HEK293 (cell line): ENCODE measurements at regions of chr12 and their contacts with region 1.

Region 1: DNA sequence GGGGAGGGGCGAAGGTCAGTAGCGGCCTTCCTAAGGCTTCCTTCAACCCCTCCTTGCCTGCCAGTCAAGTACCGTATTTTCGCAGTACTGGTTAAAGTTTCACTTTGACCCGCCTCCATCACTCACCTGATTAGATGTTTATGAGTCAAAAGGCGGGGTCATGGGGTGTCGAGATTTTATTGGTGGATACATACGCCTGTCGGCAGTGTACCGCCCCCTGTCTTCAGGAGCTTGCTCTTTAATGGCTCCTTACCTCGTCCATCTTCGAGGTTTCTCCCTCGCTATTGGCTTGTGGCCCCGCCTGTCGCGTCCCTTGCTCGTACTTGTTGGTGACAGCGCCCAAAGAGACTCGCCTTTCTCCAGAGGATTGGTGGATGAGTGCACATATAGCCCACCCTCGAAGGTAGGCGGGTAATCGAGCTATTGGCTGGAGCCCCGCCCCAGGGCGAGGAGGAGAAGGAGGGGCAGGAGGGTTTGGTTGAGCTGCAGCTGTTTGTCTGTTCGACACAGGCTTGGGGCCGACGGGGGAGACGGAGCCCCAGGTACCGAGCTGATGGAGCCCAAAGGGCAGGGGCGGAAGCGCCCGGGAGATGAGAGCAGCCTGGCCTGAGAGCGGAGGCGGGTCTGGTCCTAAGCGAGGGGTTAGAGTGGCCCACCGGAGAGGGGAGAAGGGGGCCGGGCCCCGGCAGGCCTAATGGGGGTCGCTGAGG is at the start of gene RAB5B:
- H3K4me3 ChIP-seq: peak within 1 kb of the TSS; percentile 87
- H3K27ac ChIP-seq: peak within 1 kb of the TSS; percentile 83
- H3K4me1 ChIP-seq: peaks cover 4% of the 10 kb centered on the region; the same call in 1 of the 2 replicates
- CTCF ChIP-seq: no peak

Region 2: GRCh38 chr12:55728939-55729823 is 244.6 kb before region 1 on chr12 and contains the start of gene CD63:
- CTCF ChIA-PET with region 1: no interaction called
- POLR2A ChIA-PET with region 1: interaction called, 12 read pairs
- H3K4me3 ChIP-seq: peak within 1 kb of the TSS; percentile 77
- H3K27ac ChIP-seq: peak within 1 kb of the TSS; percentile 91
- H3K4me1 ChIP-seq: no peaks in the 10 kb centered on the region; the same call in 1 of the 2 replicates
- CTCF ChIP-seq: no peak

Region 3: DNA sequence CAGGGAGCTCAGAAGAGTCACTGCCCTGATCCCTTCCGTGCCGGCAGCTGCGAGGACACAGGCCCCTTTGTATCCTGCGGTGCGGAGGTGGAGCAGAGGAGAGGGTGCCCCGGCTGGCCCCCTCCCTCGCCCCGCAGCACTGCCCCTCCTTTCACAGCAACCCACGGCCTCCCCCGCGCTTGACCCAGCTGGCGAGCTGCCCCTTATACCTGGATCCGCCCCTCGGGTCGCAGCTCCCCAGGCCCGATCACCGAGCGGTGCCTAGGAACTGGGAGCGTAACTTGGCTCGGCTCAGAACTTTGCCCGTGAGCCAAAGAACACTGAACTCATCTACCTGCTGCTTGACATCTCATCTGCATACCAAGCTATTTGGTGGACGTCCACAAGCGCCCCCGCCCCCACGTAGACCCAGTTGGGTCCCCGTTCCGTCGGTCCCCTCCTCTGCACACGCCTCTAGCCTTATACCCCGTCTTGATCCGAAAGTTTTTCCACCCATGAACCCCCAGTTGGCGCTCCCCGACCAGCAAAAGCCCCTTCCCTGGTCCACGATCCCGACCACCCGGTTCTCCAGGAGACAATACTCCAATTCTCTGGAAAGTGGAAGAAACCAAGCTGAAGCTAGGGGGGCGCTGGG is 143.7 kb before region 1 on chr12:
- CTCF ChIA-PET with region 1: no interaction called
- POLR2A ChIA-PET with region 1: interaction called, 27 read pairs
- H3K4me3 ChIP-seq: peak overlapping the region; percentile 83
- H3K27ac ChIP-seq: peak overlapping the region; percentile 77
- H3K4me1 ChIP-seq: peaks cover 12% of the 10 kb centered on the region
- CTCF ChIP-seq: no peak; the same call in 1 of the 2 replicates

Region 4: GRCh38 chr12:55931780-55932550 is 41.8 kb before region 1 on chr12:
- CTCF ChIA-PET with region 1: interaction called, 4 read pairs
- POLR2A ChIA-PET with region 1: interaction called, 20 read pairs
- H3K4me3 ChIP-seq: peak overlapping the region; percentile 58
- H3K27ac ChIP-seq: no peak overlapping the region; the same call in 1 of the 2 replicates
- H3K4me1 ChIP-seq: peaks cover 4% of the 10 kb centered on the region; the same call in 1 of the 2 replicates
- CTCF ChIP-seq: no peak

Region 5: DNA sequence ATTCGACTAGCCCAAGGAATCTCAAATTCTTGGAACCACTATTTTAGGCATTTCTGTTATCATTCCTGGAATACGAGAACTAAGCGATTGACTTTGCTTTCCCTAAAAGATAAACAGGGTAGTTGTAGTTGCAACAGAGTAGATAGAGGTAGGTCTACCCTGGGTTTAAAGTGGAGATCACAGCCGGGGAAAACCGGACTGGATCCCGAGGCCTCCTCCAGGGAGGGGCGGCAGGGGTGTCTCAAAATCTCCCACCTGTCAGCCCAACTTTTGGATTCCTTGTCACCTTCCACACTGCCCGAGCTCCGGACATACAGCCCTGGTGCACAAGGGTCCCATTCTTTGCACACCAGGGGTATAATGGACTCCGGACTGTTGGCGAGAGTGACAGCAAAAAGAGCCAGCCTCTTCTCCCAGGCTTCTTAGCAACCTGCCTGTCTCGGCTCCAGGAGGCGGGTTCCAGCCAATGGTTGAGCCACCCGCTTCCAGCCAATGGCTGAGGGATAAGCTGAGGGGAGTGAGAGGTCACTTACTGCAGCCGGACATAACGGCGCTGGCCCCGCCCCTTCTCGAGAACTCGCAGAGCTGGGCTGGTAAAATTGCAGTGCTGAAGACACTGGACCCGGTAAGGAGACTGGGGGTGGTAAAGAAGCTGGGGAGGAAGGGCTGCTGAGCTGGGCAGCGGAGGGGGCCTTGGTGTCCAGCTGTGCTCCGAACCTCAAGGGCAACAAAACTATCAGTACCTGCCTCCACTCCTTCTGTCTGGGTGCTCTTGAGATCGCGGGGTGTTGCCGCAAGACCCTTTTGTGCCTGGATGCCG is 23.2 kb after region 1 on chr12 and contains the start of gene SUOX:
- CTCF ChIA-PET with region 1: interaction called, 30 read pairs
- POLR2A ChIA-PET with region 1: interaction called, 41 read pairs
- H3K4me3 ChIP-seq: peak within 1 kb of the TSS; percentile 65
- H3K27ac ChIP-seq: peak within 1 kb of the TSS; percentile 38; the same call in 1 of the 2 replicates
- H3K4me1 ChIP-seq: no peaks in the 10 kb centered on the region; the same call in 1 of the 2 replicates
- CTCF ChIP-seq: no peak

Region 6: GRCh38 chr12:56041552-56042429 is 68.0 kb after region 1 on chr12 and contains the start of gene RPS26:
- CTCF ChIA-PET with region 1: no interaction called
- POLR2A ChIA-PET with region 1: interaction called, 10 read pairs
- H3K4me3 ChIP-seq: peak within 1 kb of the TSS; percentile 75
- H3K27ac ChIP-seq: peak within 1 kb of the TSS; percentile 93
- H3K4me1 ChIP-seq: peaks cover 19% of the 10 kb centered on the region
- CTCF ChIP-seq: peak; percentile 57

Region 7: DNA sequence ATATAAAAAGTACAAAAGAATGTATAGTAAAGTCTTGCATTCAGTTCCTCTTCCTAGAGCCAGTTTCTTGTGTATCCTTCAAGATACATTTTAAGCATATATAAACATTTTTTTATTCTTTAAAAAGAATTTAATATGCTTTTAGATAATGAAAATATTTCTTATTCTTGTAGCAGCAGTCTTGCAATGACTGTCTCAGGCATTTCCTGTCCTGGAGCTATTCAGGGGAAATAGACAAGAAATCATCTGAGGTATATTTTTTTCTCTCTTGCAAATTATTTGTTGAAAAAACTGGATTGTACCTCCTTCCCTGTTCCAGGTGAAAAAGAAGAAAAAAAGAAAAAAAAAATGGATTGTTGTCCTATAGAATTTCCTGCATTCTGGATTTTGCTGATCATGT is 89.2 kb after region 1 on chr12:
- CTCF ChIA-PET with region 1: no interaction called
- POLR2A ChIA-PET with region 1: no interaction called
- H3K4me3 ChIP-seq: no peak overlapping the region
- H3K27ac ChIP-seq: no peak overlapping the region
- H3K4me1 ChIP-seq: no peaks in the 10 kb centered on the region
- CTCF ChIP-seq: no peak

Region 8: GRCh38 chr12:56117778-56118687 is 144.3 kb after region 1 on chr12 and contains the start of gene ZC3H10:
- CTCF ChIA-PET with region 1: interaction called, 3 read pairs
- POLR2A ChIA-PET with region 1: interaction called, 13 read pairs
- H3K4me3 ChIP-seq: peak within 1 kb of the TSS; percentile 78
- H3K27ac ChIP-seq: peak within 1 kb of the TSS; percentile 99
- H3K4me1 ChIP-seq: peaks cover 5% of the 10 kb centered on the region
- CTCF ChIP-seq: peak; percentile 99